ENCODE measurements at regions of chr14 and their contacts with region 1.

Region 1: DNA sequence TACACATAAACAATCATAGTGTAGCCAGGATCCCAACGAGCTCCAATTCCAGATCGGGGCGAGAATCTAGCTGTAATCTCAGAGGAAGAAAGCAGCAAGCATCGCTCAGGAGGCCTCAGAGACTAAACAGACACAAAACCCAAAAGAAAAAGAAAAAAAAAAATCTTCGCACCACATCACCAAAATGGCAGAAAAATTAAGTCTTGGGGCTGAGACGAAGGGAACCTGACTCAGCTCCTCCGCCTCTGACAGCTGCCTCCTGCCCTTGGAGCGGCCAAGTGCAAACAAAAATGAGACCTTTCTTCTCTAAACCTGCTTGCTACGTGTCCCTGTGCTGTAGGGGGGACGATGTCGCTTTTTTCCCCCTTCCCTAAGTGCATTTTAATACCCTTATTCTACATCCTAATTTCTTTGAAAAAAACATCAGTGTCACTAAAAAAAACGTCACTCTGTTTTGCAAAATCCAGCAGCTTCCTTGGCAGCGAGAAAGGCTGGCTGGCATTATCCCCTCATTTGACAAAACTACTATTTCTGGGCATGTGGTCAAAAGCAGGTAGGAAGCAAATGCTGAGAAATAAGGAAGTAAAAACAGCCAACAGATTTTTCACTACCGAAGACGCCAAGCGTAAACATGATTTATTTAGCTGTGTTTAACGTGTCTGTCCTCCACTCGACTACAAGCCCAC is 30.5 kb downstream of the BCL11B start:
- DNase-seq: peak in 9 of 35 experiments; percentile 44 to 75 (median 58)
- ATAC-seq: peak; percentile 24 to 41 (median 35)
- H3K4me3 ChIP-seq: peak overlapping the region; percentile 38 to 47
- H3K4me3 Mint-ChIP-seq: peak overlapping the region; percentile 85 to 96 (median 88)
- H3K27ac ChIP-seq: peak overlapping the region; percentile 99
- H3K27ac Mint-ChIP-seq: peak overlapping the region; percentile 98
- H3K4me1 ChIP-seq: peaks cover 82 to 93% of the 10 kb centered on the region in 2 experiments
- H3K4me1 Mint-ChIP-seq: peaks cover 86 to 88% (median 88%) of the 10 kb centered on the region in 3 donors
- H3K27me3 ChIP-seq: no peaks in the 10 kb centered on the region
- H3K27me3 Mint-ChIP-seq: no peaks in the 10 kb centered on the region

Region 2: GRCh38 chr14:98953551-98954348 is 287.7 kb before region 1 on chr14:
- CTCF ChIA-PET with region 1: no interaction called
- POLR2A ChIA-PET with region 1: no interaction called
- DNase-seq: no peak
- ATAC-seq: no peak
- H3K4me3 ChIP-seq: no peak overlapping the region
- H3K4me3 Mint-ChIP-seq: no peak overlapping the region
- H3K27ac ChIP-seq: no peak overlapping the region
- H3K27ac Mint-ChIP-seq: no peak overlapping the region
- H3K4me1 ChIP-seq: no peaks in the 10 kb centered on the region
- H3K4me1 Mint-ChIP-seq: peaks cover 0 to 8% (median 0%) of the 10 kb centered on the region in 3 donors
- H3K27me3 ChIP-seq: no peaks in the 10 kb centered on the region
- H3K27me3 Mint-ChIP-seq: no peaks in the 10 kb centered on the region

Region 3: DNA sequence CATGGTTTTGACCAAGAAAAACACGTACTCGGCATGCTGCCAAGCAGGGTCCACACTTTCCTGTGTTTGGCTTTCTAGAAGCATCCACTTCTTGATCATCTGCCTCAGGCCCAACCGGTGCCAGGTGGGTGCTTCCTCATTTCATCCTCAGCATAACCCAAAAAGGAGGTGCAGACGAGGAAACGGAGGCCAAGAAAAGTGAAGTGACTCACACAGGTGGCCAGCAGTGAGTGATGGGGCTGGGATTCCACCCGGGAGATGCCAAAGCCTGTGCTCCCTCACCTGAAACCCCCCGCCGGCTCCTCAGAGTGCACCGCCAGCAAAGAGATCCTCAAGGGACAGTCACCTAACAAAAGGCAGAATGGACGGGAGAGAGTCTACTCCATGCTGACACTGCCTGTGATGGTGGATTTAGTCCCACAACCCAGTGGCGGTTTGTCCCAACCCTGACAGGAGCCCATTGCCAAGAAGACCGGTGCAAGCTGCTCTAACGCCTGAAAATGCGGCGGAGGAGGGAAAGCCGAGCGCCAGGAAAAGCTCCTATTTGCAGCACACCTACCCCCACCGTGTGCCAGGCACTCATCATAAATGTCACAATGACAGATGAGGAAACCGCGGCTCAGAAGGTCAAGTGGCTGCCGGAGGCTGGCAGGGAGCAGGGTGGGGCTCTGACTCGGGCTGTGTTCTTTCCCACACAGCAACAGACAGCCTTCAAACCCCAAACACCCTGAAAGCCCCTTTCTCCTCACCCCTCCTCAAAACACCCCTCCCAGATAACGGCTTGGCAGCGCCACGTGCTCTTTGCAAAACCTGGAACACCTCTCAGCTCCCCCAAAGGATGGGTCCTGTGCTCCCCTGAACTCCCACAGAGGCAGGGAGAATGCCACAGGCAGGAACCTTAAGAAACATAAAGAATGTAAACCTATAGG is 11.7 kb after region 1 on chr14:
- CTCF ChIA-PET with region 1: interaction called in 1 of 2 experiments, 6 read pairs
- POLR2A ChIA-PET with region 1: interaction called, 8 to 23 read pairs
- DNase-seq: peak in 27 of 35 experiments; percentile 29 to 81 (median 60)
- ATAC-seq: peak; percentile 54 to 66 (median 60)
- H3K4me3 ChIP-seq: peak overlapping the region in 1 of 2 donors; percentile 31
- H3K4me3 Mint-ChIP-seq: peak overlapping the region; percentile 80 to 96 (median 81)
- H3K27ac ChIP-seq: peak overlapping the region; percentile 99
- H3K27ac Mint-ChIP-seq: peak overlapping the region; percentile 99 to 100
- H3K4me1 ChIP-seq: peaks cover 91 to 100% of the 10 kb centered on the region in 2 experiments
- H3K4me1 Mint-ChIP-seq: peaks cover 98% of the 10 kb centered on the region in 3 donors
- H3K27me3 ChIP-seq: no peaks in the 10 kb centered on the region
- H3K27me3 Mint-ChIP-seq: no peaks in the 10 kb centered on the region

Region 4: GRCh38 chr14:99260587-99261551 is 19.4 kb after region 1 on chr14:
- CTCF ChIA-PET with region 1: interaction called, 8 to 75 read pairs
- POLR2A ChIA-PET with region 1: interaction called, 10 to 40 read pairs
- DNase-seq: peak in 34 of 35 experiments; percentile 57 to 83 (median 70)
- ATAC-seq: peak; percentile 15 to 64 (median 54)
- H3K4me3 ChIP-seq: peak overlapping the region; percentile 28 to 90
- H3K4me3 Mint-ChIP-seq: peak overlapping the region; percentile 94 to 98 (median 96)
- H3K27ac ChIP-seq: peak overlapping the region; percentile 99
- H3K27ac Mint-ChIP-seq: peak overlapping the region; percentile 99 to 100
- H3K4me1 ChIP-seq: peaks cover 67 to 87% of the 10 kb centered on the region in 2 experiments
- H3K4me1 Mint-ChIP-seq: peaks cover 97 to 99% (median 98%) of the 10 kb centered on the region in 3 donors
- H3K27me3 ChIP-seq: no peaks in the 10 kb centered on the region
- H3K27me3 Mint-ChIP-seq: no peaks in the 10 kb centered on the region

Region 5: DNA sequence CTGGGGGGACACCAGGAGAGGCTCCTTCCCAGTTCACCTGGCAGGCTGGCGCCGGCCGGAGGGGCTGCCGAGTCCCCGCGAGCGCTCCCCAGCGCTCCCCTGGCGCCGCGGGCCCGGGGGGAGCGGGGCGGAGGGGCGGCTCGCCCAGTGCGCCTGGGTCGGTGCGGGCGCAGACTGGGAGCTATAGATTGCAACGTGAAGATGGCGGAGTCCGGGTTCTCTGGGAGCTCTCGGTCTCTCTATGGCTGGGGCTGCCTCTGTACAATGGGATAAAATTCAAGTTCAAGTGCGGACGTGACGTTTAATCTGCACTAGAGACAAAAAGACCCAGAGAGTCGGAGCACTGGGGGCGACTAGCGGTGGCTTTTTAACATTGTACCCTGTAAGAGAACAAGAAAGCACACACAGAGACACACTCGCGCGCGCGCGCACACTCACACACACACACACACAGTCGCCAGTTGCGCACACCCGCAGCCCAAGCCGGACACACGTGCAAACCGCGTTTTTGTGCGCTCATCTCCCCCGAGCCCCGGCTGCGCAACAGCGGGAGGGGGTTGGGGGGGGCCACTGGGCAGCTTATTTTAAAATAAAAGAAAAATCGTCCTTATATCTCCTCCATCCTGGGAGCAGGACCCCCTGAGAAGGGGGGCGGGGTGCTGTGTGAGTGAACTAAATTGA is 30.6 kb after region 1 on chr14 and contains the start of gene BCL11B:
- CTCF ChIA-PET with region 1: interaction called, 6 to 75 read pairs
- POLR2A ChIA-PET with region 1: interaction called, 4 to 40 read pairs
- DNase-seq: peak; percentile 74 to 95 (median 87)
- ATAC-seq: peak; percentile 68 to 81 (median 73)
- H3K4me3 ChIP-seq: peak within 1 kb of the TSS; percentile 90 to 97
- H3K4me3 Mint-ChIP-seq: peak within 1 kb of the TSS; percentile 95 to 98 (median 96)
- H3K27ac ChIP-seq: peak within 1 kb of the TSS; percentile 74
- H3K27ac Mint-ChIP-seq: peak within 1 kb of the TSS; percentile 91 to 99
- H3K4me1 ChIP-seq: peaks cover 9 to 34% of the 10 kb centered on the region in 2 experiments
- H3K4me1 Mint-ChIP-seq: peaks cover 30 to 45% (median 38%) of the 10 kb centered on the region in 3 donors
- H3K27me3 ChIP-seq: no peaks in the 10 kb centered on the region
- H3K27me3 Mint-ChIP-seq: no peaks in the 10 kb centered on the region
- total RNA-seq, gene BCL11B: 181 to 240 (median 196) TPM

Measured in T-cell (primary cell).